Esophagus muscularis mucosa (tissue), 4 donors: ENCODE measurements at regions of chr12 and their contacts with region 1.

Region 1: DNA sequence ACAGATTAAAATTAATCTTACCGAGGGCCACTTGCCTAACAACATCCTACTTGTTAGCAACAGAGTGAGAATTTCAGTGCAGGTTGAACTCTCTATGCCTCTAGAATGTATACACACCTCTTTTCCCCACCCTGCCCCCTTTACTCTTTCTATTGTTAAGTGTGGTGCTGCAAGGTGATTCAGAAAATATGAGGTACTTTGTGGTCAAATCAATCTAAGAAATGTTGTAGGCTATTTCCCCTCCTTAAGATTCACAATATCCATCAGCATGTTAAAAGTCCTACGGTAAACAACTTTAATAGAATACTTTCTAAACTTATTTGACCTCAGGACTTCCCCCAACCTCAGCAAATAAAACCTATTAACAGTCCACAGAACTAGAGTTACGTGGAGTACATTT is 106.0 kb downstream of the LMNTD1 start:
- DNase-seq: no peak
- H3K4me3 ChIP-seq: no peak overlapping the region
- H3K27ac ChIP-seq: no peak overlapping the region
- H3K4me1 ChIP-seq: no peaks in the 10 kb centered on the region
- H3K27me3 ChIP-seq: no peaks in the 10 kb centered on the region
- CTCF ChIP-seq: no peak
- EP300 ChIP-seq: no peak
- POLR2A ChIP-seq: no peak

Region 2: DNA sequence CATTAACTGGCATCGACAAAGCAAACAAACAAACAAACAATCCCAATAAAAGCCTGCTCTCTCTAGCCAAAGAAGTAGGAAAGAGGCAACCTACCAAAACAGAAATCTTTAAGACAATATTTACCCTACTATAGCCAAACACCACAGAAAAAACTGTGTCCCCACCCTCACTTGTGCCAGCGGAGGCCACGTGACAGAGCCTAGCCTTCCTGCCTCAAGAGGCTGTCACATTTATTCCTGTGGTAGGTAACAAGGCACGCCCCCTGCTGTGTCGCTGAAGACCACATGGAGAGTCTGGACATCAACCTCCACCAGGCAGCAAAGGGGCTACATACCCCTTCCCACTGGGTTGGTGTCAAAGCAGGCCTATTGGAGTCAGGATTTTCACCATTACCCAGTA is 42.1 kb before region 1 on chr12:
- intact Hi-C with region 1: no loop called
- DNase-seq: no peak
- H3K4me3 ChIP-seq: no peak overlapping the region
- H3K27ac ChIP-seq: no peak overlapping the region
- H3K4me1 ChIP-seq: no peaks in the 10 kb centered on the region
- H3K27me3 ChIP-seq: no peaks in the 10 kb centered on the region
- CTCF ChIP-seq: no peak
- EP300 ChIP-seq: no peak
- POLR2A ChIP-seq: no peak

Region 3: GRCh38 chr12:25573346-25573745 is 126.3 kb after region 1 on chr12:
- intact Hi-C with region 1: loop called (anchors 10 kb)
- DNase-seq: no peak
- H3K4me3 ChIP-seq: no peak overlapping the region
- H3K27ac ChIP-seq: no peak overlapping the region
- H3K4me1 ChIP-seq: no peaks in the 10 kb centered on the region
- H3K27me3 ChIP-seq: no peaks in the 10 kb centered on the region
- CTCF ChIP-seq: no peak
- EP300 ChIP-seq: no peak
- POLR2A ChIP-seq: no peak